Lower leg skin (tissue), 4 donors: ENCODE measurements at regions of chr18 and their contacts with region 1.

Region 1: GRCh38 chr18:42414746-42415454 is 459.9 kb downstream of the PIK3C3 start:
- DNase-seq: peak in 1 of 2 donors; percentile 25
- H3K4me3 ChIP-seq: no peak overlapping the region
- CTCF ChIP-seq: no peak
- POLR2A ChIP-seq: no peak

Region 2: GRCh38 chr18:41820784-41821183 is 594.1 kb before region 1 on chr18:
- intact Hi-C with region 1: loop called (anchors 5 kb)
- DNase-seq: no peak
- H3K4me3 ChIP-seq: no peak overlapping the region
- CTCF ChIP-seq: no peak
- POLR2A ChIP-seq: no peak